Dendritic cell treated with granulocyte-macrophage colony-stimulating factor and Interleukin-4, amounts not matched to agents 40 ng/mL and 50 ng/mL, for 4 days (primary cell): ENCODE measurements at regions of chr11 and their contacts with region 1.

Region 1: GRCh38 chr11:11787305-11788062 is 54.3 kb upstream of the USP47 start:
- H3K4me3 Mint-ChIP-seq: no peak overlapping the region
- H3K27ac Mint-ChIP-seq: no peak overlapping the region
- H3K4me1 Mint-ChIP-seq: peaks cover 21% of the 10 kb centered on the region
- H3K27me3 Mint-ChIP-seq: peaks cover 14% of the 10 kb centered on the region

Region 2: GRCh38 chr11:10792398-10792975 is 995.0 kb before region 1 on chr11:
- intact Hi-C with region 1: loop called (anchors 10 kb)
- H3K4me3 Mint-ChIP-seq: no peak overlapping the region
- H3K27ac Mint-ChIP-seq: no peak overlapping the region
- H3K4me1 Mint-ChIP-seq: peaks cover 21% of the 10 kb centered on the region
- H3K27me3 Mint-ChIP-seq: peaks cover 17% of the 10 kb centered on the region

Region 3: DNA sequence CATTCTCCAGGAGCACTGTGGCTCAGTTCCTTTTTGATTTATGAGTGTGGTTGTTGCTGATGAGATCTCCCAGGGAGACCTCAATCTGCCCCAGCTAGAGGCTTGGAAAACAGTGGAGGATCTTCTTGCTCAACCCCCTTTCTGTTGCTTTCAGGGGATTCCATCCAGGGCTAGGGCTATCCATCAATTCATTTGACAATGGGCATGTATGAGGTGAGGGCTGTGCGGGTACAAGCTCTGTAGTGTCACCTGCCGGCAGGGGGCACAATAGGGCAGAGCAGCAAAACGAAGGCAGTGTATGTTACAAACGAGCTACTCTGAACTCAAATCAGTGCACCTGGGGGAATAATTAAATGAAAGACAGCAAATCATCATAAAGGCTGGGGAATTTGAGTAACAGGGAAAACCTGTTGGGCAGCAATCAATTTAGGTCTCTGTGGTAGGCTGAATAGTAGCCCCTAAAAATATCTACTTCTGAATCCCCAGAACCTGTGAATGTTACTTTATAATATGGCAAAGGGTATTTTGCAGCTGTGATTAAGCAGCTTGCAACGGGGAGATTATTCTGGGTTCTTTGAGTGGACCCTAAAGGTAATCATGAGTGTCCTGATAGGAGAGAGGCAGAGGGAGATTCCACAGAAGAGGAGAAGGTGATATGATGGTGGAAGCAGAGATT is 759.3 kb before region 1 on chr11:
- intact Hi-C with region 1: loop called (anchors 1 kb)
- H3K4me3 Mint-ChIP-seq: no peak overlapping the region
- H3K27ac Mint-ChIP-seq: no peak overlapping the region
- H3K4me1 Mint-ChIP-seq: peaks cover 12% of the 10 kb centered on the region
- H3K27me3 Mint-ChIP-seq: peaks cover 27% of the 10 kb centered on the region

Region 4: GRCh38 chr11:11717064-11717725 is 70.3 kb before region 1 on chr11:
- intact Hi-C with region 1: no loop called
- H3K4me3 Mint-ChIP-seq: no peak overlapping the region
- H3K27ac Mint-ChIP-seq: no peak overlapping the region
- H3K4me1 Mint-ChIP-seq: no peaks in the 10 kb centered on the region
- H3K27me3 Mint-ChIP-seq: peaks cover 8% of the 10 kb centered on the region

Region 5: GRCh38 chr11:11813288-11813962 is 25.9 kb after region 1 on chr11:
- intact Hi-C with region 1: no loop called
- H3K4me3 Mint-ChIP-seq: no peak overlapping the region
- H3K27ac Mint-ChIP-seq: no peak overlapping the region
- H3K4me1 Mint-ChIP-seq: peaks cover 6% of the 10 kb centered on the region
- H3K27me3 Mint-ChIP-seq: peaks cover 7% of the 10 kb centered on the region